ENCODE measurements at regions of chr9 and their contacts with region 1.

Region 1: GRCh38 chr9:115883457-115884329 is 269.9 kb upstream of the PAPPA start:
- H3K4me3 ChIP-seq: no peak overlapping the region
- H3K27ac ChIP-seq: no peak overlapping the region
- H3K4me1 ChIP-seq: no peaks in the 10 kb centered on the region
- CTCF ChIP-seq: peak; percentile 36; the same call in 1 of the 2 replicates

Region 2: DNA sequence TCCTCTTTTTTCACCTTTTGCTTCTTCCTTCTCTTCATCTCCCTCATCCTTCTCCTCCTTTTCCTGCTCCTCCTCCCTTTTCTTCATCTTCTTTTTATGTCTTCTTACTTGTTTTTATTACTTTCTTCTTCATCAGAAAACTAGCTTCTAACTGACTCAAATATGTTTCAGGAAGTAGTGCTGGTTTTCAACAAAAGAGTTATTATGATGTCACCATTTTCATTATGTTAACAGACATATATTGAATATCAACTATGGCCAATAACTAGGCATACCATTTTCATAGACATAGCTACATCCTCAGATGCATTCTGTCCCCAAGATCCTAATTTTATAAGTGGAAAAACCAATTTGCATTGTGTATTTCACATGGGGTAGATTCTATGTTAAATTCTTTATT is 17.0 kb after region 1 on chr9:
- CTCF ChIA-PET with region 1: no interaction called
- POLR2A ChIA-PET with region 1: no interaction called
- H3K4me3 ChIP-seq: no peak overlapping the region
- H3K27ac ChIP-seq: no peak overlapping the region
- H3K4me1 ChIP-seq: no peaks in the 10 kb centered on the region
- CTCF ChIP-seq: no peak

Region 3: DNA sequence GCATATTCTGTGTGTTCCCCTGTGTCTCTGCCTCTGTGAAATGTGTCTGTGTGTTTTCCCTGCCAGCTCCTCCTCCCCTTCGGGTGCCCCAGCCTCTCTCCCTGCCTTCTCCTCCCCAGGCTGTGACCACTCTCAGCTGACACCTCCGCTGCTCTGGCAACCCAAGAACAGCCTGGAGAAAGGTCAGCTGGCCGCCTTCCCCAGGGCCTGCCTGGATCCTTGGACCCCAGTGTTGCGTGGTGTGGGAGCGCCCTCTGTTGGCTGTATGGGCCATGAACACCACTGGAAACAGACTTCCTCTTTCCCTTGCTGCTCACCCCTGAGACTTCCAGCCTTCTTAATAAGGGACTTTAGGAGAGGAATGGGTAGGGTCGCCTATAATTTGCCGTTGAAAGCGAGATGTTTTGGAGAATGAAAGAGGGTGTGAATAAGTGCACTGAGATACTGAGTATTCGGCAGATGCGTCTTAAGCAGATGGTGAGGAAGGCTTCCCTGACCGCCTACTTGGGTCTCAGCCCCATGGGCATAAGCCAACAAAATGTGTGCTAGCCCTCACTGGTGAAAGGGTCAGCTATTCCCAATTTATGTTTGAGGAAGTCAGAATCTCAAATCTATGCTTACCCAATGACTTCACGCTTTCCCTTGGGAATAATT is 688.5 kb after region 1 on chr9:
- CTCF ChIA-PET with region 1: interaction called, 22 read pairs
- POLR2A ChIA-PET with region 1: no interaction called
- H3K4me3 ChIP-seq: no peak overlapping the region
- H3K27ac ChIP-seq: no peak overlapping the region
- H3K4me1 ChIP-seq: peaks cover 4% of the 10 kb centered on the region
- CTCF ChIP-seq: peak; percentile 80

Region 4: GRCh38 chr9:116632990-116633838 is 749.5 kb after region 1 on chr9:
- CTCF ChIA-PET with region 1: no interaction called
- POLR2A ChIA-PET with region 1: no interaction called
- H3K4me3 ChIP-seq: no peak overlapping the region
- H3K27ac ChIP-seq: no peak overlapping the region
- H3K4me1 ChIP-seq: no peaks in the 10 kb centered on the region
- CTCF ChIP-seq: no peak

Measured in HEK293 (cell line).